ENCODE measurements at regions of chr1 and their contacts with region 1.

Region 1: DNA sequence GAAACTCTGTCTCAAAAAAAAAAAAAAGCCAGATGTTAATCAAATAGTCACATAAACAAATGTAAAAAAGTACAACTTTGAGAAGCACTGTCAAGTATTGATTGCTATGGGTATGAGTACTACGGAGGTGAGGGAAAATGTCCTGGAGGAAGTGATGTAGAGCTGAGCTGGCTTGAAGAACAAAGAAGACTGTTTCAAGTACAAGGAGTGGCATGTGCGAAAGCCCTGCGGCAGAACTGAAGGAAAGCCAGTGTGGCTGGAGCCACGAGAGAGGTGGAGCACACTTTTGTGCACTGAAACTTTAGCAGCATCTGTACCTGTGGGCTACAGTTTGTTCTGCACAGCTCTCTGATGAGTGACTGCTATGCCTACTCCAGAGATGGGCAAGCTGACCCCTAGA is 5.4 kb upstream of the RPS6KA1 start:
- DNase-seq: peak; percentile 96
- H3K4me3 ChIP-seq: no peak overlapping the region
- H3K27ac ChIP-seq: peak overlapping the region; percentile 79
- H3K4me1 ChIP-seq: peaks cover 14% of the 10 kb centered on the region
- H3K27me3 ChIP-seq: no peaks in the 10 kb centered on the region
- CTCF ChIP-seq: no peak

Region 2: GRCh38 chr1:26555550-26556510 is 31.6 kb after region 1 on chr1:
- CTCF ChIA-PET with region 1: no interaction called
- dilution Hi-C with region 1: loop called (anchors 5 kb)
- in situ Hi-C with region 1: no loop called
- intact Hi-C with region 1: no loop called
- DNase-seq: no peak
- H3K4me3 ChIP-seq: no peak overlapping the region
- H3K27ac ChIP-seq: no peak overlapping the region
- H3K4me1 ChIP-seq: peaks cover 27% of the 10 kb centered on the region
- H3K27me3 ChIP-seq: no peaks in the 10 kb centered on the region
- CTCF ChIP-seq: no peak

Measured in mammary epithelial cell (primary cell).